Activated CD4-positive, alpha-beta T cell treated with anti-CD3 and anti-CD28 coated beads, Interleukin-2, amount 10 ng/mL, durations not matched to agents 24 days and 14 days (primary cell): ENCODE measurements at regions of chrX and their contacts with region 1.

Region 1: GRCh38 chrX:78653118-78653822 is 5.9 kb downstream of the RTL3 start:
- DNase-seq: peak; percentile 63
- H3K4me3 Mint-ChIP-seq: peak overlapping the region; percentile 76
- H3K27ac Mint-ChIP-seq: peak overlapping the region; percentile 79
- H3K4me1 Mint-ChIP-seq: peaks cover 19% of the 10 kb centered on the region
- H3K27me3 Mint-ChIP-seq: no peaks in the 10 kb centered on the region

Region 2: DNA sequence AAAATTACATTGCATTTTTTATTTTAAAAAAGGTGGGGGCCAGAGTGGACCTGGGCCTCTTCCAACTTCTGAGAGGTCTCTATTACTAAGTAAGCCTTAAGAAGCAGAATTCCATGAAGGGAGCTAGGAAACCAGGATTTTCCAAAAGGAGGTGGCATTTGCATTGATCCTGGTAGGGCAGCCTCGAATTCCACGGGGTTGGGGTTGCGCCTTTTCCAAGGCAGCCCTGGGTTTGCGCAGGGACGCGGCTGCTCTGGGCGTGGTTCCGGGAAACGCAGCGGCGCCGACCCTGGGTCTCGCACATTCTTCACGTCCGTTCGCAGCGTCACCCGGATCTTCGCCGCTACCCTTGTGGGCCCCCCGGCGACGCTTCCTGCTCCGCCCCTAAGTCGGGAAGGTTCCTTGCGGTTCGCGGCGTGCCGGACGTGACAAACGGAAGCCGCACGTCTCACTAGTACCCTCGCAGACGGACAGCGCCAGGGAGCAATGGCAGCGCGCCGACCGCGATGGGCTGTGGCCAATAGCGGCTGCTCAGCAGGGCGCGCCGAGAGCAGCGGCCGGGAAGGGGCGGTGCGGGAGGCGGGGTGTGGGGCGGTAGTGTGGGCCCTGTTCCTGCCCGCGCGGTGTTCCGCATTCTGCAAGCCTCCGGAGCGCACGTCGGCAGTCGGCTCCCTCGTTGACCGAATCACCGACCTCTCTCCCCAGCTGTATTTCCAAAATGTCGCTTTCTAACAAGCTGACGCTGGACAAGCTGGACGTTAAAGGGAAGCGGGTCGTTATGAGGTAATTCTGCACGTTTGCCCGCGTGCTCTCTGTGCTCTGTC is 549.4 kb before region 1 on chrX and contains the start of gene PGK1:
- intact Hi-C with region 1: loop called (anchors 10 kb)
- DNase-seq: peak; percentile 98
- H3K4me3 Mint-ChIP-seq: peak within 1 kb of the TSS; percentile 97
- H3K27ac Mint-ChIP-seq: peak within 1 kb of the TSS; percentile 91
- H3K4me1 Mint-ChIP-seq: peaks cover 25% of the 10 kb centered on the region
- H3K27me3 Mint-ChIP-seq: no peaks in the 10 kb centered on the region
- total RNA-seq, gene PGK1: 1,039 and 1,063 TPM in 2 replicates

Region 3: DNA sequence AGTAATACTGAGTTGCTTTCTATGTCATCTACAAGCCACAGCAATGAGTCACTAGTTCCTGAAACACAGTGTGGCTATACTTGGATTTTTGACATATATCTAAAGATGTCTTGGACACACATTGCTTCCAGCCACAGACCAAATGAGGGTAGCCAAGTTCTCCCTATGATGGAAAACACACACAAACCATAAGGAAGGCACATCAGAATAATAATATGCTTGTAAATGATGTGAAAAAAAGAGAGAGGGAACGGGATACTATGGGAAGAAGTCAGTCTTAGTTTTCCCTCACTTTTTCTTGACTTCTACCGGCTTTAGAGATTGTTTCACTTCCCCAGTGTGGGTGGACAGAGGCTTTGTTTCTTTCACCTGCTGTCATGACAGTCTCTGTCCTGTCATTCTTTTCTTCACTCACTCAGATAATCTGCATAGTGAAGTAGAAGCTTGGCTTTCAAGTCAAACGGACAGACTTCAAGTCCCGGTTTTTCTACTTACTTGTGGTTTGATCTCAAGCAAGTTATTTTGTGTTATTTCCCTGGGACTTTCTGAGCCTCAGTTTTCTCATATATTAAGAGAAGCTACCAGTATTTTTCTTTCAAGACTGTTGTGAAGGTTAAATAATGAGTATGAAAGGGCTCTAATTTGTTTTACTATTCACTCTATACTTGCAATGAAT is 326.7 kb after region 1 on chrX:
- intact Hi-C with region 1: loop called (anchors 10 kb)
- DNase-seq: peak; percentile 58
- H3K4me3 Mint-ChIP-seq: peak overlapping the region; percentile 79
- H3K27ac Mint-ChIP-seq: peak overlapping the region; percentile 100
- H3K4me1 Mint-ChIP-seq: peaks cover 19% of the 10 kb centered on the region
- H3K27me3 Mint-ChIP-seq: no peaks in the 10 kb centered on the region

Region 4: GRCh38 chrX:79153348-79153747 is 500.1 kb after region 1 on chrX:
- intact Hi-C with region 1: loop called (anchors 5 kb)
- DNase-seq: no peak
- H3K4me3 Mint-ChIP-seq: peak overlapping the region; percentile 89
- H3K27ac Mint-ChIP-seq: peak overlapping the region; percentile 93
- H3K4me1 Mint-ChIP-seq: peaks cover 60% of the 10 kb centered on the region
- H3K27me3 Mint-ChIP-seq: no peaks in the 10 kb centered on the region

Region 5: GRCh38 chrX:79270401-79270800 is 617.1 kb after region 1 on chrX:
- intact Hi-C with region 1: loop called (anchors 5 kb)
- DNase-seq: peak; percentile 88
- H3K4me3 Mint-ChIP-seq: peak overlapping the region; percentile 23
- H3K27ac Mint-ChIP-seq: peak overlapping the region; percentile 20
- H3K4me1 Mint-ChIP-seq: peaks cover 26% of the 10 kb centered on the region
- H3K27me3 Mint-ChIP-seq: no peaks in the 10 kb centered on the region